ENCODE measurements at regions of chr15 and their contacts with region 1.

Region 1: DNA sequence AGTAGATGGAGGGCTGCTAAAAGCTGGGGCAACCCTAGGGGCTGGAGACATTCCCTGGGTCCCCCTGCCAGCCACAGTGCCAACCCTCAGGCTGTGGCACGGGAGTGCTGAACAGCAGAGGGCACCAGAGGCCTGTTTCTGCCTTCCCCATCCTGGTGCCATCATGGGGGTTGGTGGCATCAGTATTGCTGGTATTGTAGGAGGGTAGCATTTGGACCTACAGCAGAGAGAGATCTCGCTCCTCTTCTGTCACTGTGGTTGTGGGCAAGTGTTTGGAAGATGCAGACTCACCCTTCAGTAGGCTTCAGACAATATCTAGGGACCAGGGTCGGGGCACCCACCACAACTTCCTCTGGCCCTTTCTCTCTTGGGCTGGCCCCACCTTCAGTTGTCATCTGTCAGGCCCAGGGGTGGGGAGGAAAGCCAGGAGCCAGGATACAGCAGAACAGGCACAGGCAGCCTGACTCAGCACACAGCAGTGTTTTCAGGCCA is 123.5 kb downstream of the RPLP1 start:
- DNase-seq: peak; percentile 26
- H3K4me3 Mint-ChIP-seq: no peak overlapping the region
- H3K27ac Mint-ChIP-seq: no peak overlapping the region
- H3K4me1 Mint-ChIP-seq: peaks cover 35% of the 10 kb centered on the region
- H3K27me3 Mint-ChIP-seq: peaks cover 5% of the 10 kb centered on the region

Region 2: DNA sequence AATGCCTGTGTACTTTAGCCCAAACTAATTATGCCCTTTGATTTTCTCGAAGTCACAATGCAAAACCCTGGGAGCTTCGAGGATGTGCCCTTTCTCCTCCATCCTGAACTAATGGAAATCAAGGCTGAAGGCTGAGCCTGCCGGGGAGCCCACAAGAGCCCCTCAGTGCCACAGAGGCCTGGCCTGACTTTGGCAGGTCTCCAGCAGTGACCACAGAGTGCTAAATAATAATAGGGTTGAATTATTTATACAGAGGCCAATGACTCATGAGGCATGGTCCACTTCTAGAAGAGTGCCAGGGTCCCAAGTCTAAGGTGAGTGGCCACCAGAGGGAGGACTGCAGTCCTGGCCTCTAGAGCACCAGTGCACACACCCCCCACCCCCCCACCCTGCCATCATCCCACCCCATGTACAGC is 434.8 kb before region 1 on chr15:
- intact Hi-C with region 1: no loop called
- DNase-seq: no peak
- H3K4me3 Mint-ChIP-seq: no peak overlapping the region
- H3K27ac Mint-ChIP-seq: no peak overlapping the region
- H3K4me1 Mint-ChIP-seq: no peaks in the 10 kb centered on the region
- H3K27me3 Mint-ChIP-seq: peaks cover 21% of the 10 kb centered on the region

Region 3: GRCh38 chr15:69628371-69629093 is 52.5 kb after region 1 on chr15:
- intact Hi-C with region 1: no loop called
- DNase-seq: no peak
- H3K4me3 Mint-ChIP-seq: no peak overlapping the region
- H3K27ac Mint-ChIP-seq: no peak overlapping the region
- H3K4me1 Mint-ChIP-seq: no peaks in the 10 kb centered on the region
- H3K27me3 Mint-ChIP-seq: peaks cover 18% of the 10 kb centered on the region

Region 4: GRCh38 chr15:69703532-69704187 is 127.6 kb after region 1 on chr15:
- intact Hi-C with region 1: no loop called
- DNase-seq: no peak
- H3K4me3 Mint-ChIP-seq: no peak overlapping the region
- H3K27ac Mint-ChIP-seq: no peak overlapping the region
- H3K4me1 Mint-ChIP-seq: no peaks in the 10 kb centered on the region
- H3K27me3 Mint-ChIP-seq: peaks cover 24% of the 10 kb centered on the region

Region 5: GRCh38 chr15:69713726-69714559 is 137.9 kb after region 1 on chr15:
- intact Hi-C with region 1: loop called (anchors 1 kb)
- DNase-seq: peak; percentile 79
- H3K4me3 Mint-ChIP-seq: peak overlapping the region; percentile 40
- H3K27ac Mint-ChIP-seq: peak overlapping the region; percentile 85
- H3K4me1 Mint-ChIP-seq: peaks cover 49% of the 10 kb centered on the region
- H3K27me3 Mint-ChIP-seq: peaks cover 19% of the 10 kb centered on the region

Region 6: GRCh38 chr15:69976366-69976994 is 400.4 kb after region 1 on chr15:
- intact Hi-C with region 1: loop called (anchors 10 kb)
- DNase-seq: peak; percentile 41
- H3K4me3 Mint-ChIP-seq: no peak overlapping the region
- H3K27ac Mint-ChIP-seq: no peak overlapping the region
- H3K4me1 Mint-ChIP-seq: no peaks in the 10 kb centered on the region
- H3K27me3 Mint-ChIP-seq: peaks cover 16% of the 10 kb centered on the region

Region 7: GRCh38 chr15:70466895-70467529 is 890.9 kb after region 1 on chr15:
- intact Hi-C with region 1: loop called (anchors 2 kb)
- DNase-seq: peak; percentile 41
- H3K4me3 Mint-ChIP-seq: no peak overlapping the region
- H3K27ac Mint-ChIP-seq: no peak overlapping the region
- H3K4me1 Mint-ChIP-seq: peaks cover 7% of the 10 kb centered on the region
- H3K27me3 Mint-ChIP-seq: peaks cover 71% of the 10 kb centered on the region

Measured in activated T-helper 1 cell treated with anti-CD3 and anti-CD28 coated beads, Interleukin-12 subunit alpha, Interleukin-12 subunit beta, Interleukin-2, Interleukin-4 antibody, amounts not matched to agents 30 ng/mL and 10 ng/mL and 1 ng/mL, durations not matched to agents 14 hours and 24 hours and 36 hours (primary cell).